ENCODE measurements at regions of chr14 and their contacts with region 1.

Region 1: GRCh38 chr14:105414456-105415371 is 4.9 kb upstream of the MTA1 start:
- DNase-seq: peak; percentile 47 to 82 (median 66)
- ATAC-seq: peak; percentile 85
- H3K4me3 ChIP-seq: peak overlapping the region; percentile 61
- H3K4me3 Mint-ChIP-seq: peak overlapping the region; percentile 66 to 88 (median 76)
- H3K27ac ChIP-seq: peak overlapping the region; percentile 58
- H3K27ac Mint-ChIP-seq: peak overlapping the region in 4 of 9 donors; percentile 52 to 86 (median 78)
- H3K4me1 ChIP-seq: peaks cover 9 to 15% of the 10 kb centered on the region in 2 donors
- H3K4me1 Mint-ChIP-seq: peaks cover 6 to 25% (median 16%) of the 10 kb centered on the region in 7 donors
- H3K27me3 ChIP-seq: peaks cover 0 to 12% of the 10 kb centered on the region in 2 donors
- H3K27me3 Mint-ChIP-seq: peaks cover 0 to 31% (median 6%) of the 10 kb centered on the region in 5 donors

Region 2: GRCh38 chr14:105314287-105315200 is 100.2 kb before region 1 on chr14 and contains the start of gene PACS2:
- CTCF ChIA-PET with region 1: no interaction called
- POLR2A ChIA-PET with region 1: no interaction called
- intact Hi-C with region 1: loop called in 1 of 2 experiments (anchors 10 kb)
- DNase-seq: peak; percentile 64 to 90 (median 86)
- ATAC-seq: peak; percentile 89
- H3K4me3 ChIP-seq: peak within 1 kb of the TSS; percentile 57
- H3K4me3 Mint-ChIP-seq: peak within 1 kb of the TSS; percentile 80 to 98 (median 89)
- H3K27ac ChIP-seq: peak within 1 kb of the TSS; percentile 68
- H3K27ac Mint-ChIP-seq: peak within 1 kb of the TSS; percentile 74 to 95 (median 89)
- H3K4me1 ChIP-seq: peaks cover 13 to 21% of the 10 kb centered on the region in 2 donors
- H3K4me1 Mint-ChIP-seq: peaks cover 9 to 35% (median 23%) of the 10 kb centered on the region in 7 donors
- H3K27me3 ChIP-seq: no peaks in the 10 kb centered on the region
- H3K27me3 Mint-ChIP-seq: peaks cover 0 to 9% (median 0%) of the 10 kb centered on the region in 5 donors
- total RNA-seq, gene PACS2: 33.9 to 75.4 (median 72.3) TPM

Region 3: GRCh38 chr14:105368965-105369652 is 45.6 kb before region 1 on chr14:
- CTCF ChIA-PET with region 1: no interaction called
- POLR2A ChIA-PET with region 1: no interaction called
- intact Hi-C with region 1: loop called (anchors 2 kb)
- DNase-seq: no peak
- ATAC-seq: no peak
- H3K4me3 ChIP-seq: no peak overlapping the region
- H3K4me3 Mint-ChIP-seq: no peak overlapping the region
- H3K27ac ChIP-seq: no peak overlapping the region
- H3K27ac Mint-ChIP-seq: no peak overlapping the region
- H3K4me1 ChIP-seq: peaks cover 7 to 9% of the 10 kb centered on the region in 2 donors
- H3K4me1 Mint-ChIP-seq: peaks cover 2 to 9% (median 5%) of the 10 kb centered on the region in 7 donors
- H3K27me3 ChIP-seq: no peaks in the 10 kb centered on the region
- H3K27me3 Mint-ChIP-seq: no peaks in the 10 kb centered on the region

Region 4: DNA sequence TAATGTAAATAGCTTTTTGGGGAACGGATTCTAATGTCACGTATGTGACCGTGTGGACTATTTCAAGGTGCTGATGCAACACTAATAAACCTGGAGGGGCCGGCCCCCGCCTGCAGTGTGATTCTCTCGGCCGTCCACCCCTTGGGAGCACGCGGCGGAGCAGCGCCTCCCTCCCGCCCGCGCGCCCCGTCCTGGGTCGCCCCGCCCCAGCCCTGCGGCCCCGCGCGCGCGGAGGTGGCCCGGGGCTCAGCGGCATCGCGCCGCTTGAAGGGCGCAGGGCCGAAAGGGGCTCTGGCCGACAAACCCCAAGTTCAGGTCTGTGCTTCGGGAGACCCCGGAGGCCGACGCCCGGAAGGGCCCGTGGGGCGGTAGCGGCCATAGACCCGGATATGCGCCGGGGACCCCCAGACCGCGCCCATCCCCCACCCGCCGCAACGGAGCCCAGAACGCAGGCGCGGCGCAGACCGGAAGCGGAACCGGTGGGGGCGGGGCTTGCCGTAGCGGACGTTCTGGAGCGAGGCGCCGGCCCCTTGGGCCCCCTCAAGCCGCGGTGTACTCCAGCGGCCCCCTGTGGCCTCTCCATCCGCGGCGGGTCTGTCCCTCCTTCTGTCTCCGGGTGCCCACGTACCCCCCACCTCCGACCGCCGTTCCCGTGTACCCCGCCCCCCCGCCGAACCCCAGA is 16.5 kb before region 1 on chr14 and contains the start of gene TEX22:
- CTCF ChIA-PET with region 1: interaction called, 6 read pairs
- POLR2A ChIA-PET with region 1: interaction called, 5 read pairs
- intact Hi-C with region 1: loop called (anchors 1 kb)
- DNase-seq: peak; percentile 75 to 98 (median 84)
- ATAC-seq: peak; percentile 93
- H3K4me3 ChIP-seq: peak within 1 kb of the TSS; percentile 63
- H3K4me3 Mint-ChIP-seq: peak within 1 kb of the TSS; percentile 78 to 95 (median 83)
- H3K27ac ChIP-seq: peak within 1 kb of the TSS; percentile 87
- H3K27ac Mint-ChIP-seq: peak within 1 kb of the TSS; percentile 57 to 95 (median 86)
- H3K4me1 ChIP-seq: peaks cover 20 to 25% of the 10 kb centered on the region in 2 donors
- H3K4me1 Mint-ChIP-seq: peaks cover 6 to 29% (median 18%) of the 10 kb centered on the region in 7 donors
- H3K27me3 ChIP-seq: no peaks in the 10 kb centered on the region
- H3K27me3 Mint-ChIP-seq: no peaks in the 10 kb centered on the region
- total RNA-seq, gene TEX22: 1.4 to 10.5 (median 6.5) TPM

Region 5: GRCh38 chr14:105473677-105474482 is 59.2 kb after region 1 on chr14:
- CTCF ChIA-PET with region 1: no interaction called
- POLR2A ChIA-PET with region 1: interaction called, 3 read pairs
- intact Hi-C with region 1: loop called in 1 of 2 experiments (anchors 1 kb)
- DNase-seq: peak in 7 of 9 donors; percentile 55 to 83 (median 61)
- ATAC-seq: peak; percentile 71
- H3K4me3 ChIP-seq: peak overlapping the region; percentile 26
- H3K4me3 Mint-ChIP-seq: peak overlapping the region; percentile 64 to 83 (median 75)
- H3K27ac ChIP-seq: peak overlapping the region; percentile 45
- H3K27ac Mint-ChIP-seq: peak overlapping the region in 2 of 9 donors; percentile 19 to 23
- H3K4me1 ChIP-seq: peaks cover 7 to 34% of the 10 kb centered on the region in 2 donors
- H3K4me1 Mint-ChIP-seq: peaks cover 5 to 12% (median 7%) of the 10 kb centered on the region in 7 donors
- H3K27me3 ChIP-seq: no peaks in the 10 kb centered on the region
- H3K27me3 Mint-ChIP-seq: peaks cover 0 to 24% (median 0%) of the 10 kb centered on the region in 5 donors

Measured in naive thymus-derived CD4-positive, alpha-beta T cell (primary cell).